Heart right ventricle (tissue), 16 donors: ENCODE measurements at regions of chr9 and their contacts with region 1.

Region 1: DNA sequence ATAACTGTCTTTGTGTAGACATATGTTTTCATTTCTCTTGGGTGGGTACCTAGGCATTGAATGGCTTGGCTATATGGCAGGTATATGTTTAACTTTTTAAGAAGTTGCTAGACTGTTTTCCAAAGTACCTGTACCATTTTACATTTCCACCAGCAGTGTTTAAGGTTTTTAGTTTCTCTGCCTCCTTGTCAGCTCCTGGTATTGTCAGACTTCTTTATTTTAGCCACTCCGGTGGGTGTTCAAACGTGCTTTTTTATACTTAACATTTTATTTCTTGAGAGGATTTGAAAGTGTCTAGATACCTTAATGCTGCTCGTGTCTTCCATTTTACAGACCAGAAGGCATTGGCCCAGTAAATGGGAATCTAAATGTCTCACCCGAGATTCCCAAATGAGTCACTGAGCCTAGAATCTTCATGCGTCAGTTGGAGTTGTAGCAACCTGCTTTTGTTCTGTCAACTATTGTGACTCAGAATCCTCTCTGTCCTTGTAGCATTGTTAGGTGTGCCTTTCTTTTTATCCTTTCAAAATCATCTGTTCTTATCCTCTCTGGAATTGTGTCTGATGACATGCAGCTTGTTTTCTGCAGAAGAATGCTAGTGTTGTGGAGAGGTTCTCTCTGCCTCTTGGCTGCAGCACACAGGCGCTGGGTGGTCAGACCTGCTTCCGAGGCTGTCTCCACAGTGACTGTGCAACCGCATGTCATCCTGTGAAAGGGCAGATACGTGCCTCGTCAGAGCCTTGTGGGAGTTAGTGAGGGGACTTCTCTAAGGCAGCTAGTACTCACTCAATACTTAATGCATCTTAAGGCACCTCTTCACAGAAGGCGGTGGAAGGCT is 291.8 kb downstream of the AOPEP start:
- DNase-seq: peak; percentile 54 to 62
- ATAC-seq: peak; percentile 32 to 85 (median 78)
- H3K4me3 ChIP-seq: peak overlapping the region in 5 of 10 donors; percentile 12 to 27 (median 18)
- H3K27ac ChIP-seq: peak overlapping the region; percentile 20 to 87 (median 73)
- H3K4me1 ChIP-seq: peaks cover 22 to 100% (median 95%) of the 10 kb centered on the region in 9 donors
- H3K27me3 ChIP-seq: no peaks in the 10 kb centered on the region
- CTCF ChIP-seq: no peak

Region 2: DNA sequence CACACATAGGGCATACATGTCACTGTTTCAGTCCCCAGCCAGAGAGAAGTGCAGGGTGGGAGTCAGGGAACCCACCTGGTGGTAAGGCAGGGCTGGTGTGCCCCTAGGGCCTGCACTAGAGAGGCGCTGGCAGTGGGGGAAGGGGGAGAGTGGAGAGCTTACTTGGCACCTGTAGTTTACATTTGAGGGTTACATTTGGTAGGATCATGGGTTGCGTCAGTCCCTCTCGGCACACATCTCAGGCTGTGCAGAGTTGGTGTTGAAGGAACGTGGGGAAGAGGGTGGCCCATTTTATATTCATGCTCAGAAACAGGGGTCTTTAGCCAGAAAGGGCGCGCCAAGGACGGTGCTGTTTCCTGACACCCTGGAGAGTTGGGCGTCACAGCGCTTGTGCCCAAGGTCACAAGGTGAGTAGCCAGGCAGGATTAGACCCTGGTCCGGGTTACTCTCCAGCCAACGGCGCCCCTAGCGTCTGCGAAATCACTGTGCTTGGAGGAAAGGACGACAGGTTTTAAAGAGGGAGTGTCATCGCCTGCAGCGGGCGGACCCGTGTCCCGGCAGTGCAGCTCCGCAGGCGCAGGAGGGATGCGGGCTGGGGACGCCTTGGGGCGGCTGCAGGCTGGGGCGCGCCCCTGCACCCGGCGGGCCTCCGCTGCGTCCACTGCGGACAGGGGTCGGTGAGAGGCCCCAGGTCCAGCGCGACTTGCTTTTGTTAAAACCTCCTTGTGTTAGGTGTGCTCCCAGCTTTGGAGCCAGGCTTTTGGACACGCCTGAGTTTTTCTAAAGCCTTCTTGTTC is 26.6 kb after region 1 on chr9:
- intact Hi-C with region 1: no loop called
- DNase-seq: peak in 1 of 2 donors; percentile 54
- ATAC-seq: peak; percentile 12 to 82 (median 60)
- H3K4me3 ChIP-seq: peak overlapping the region in 3 of 10 donors; percentile 8 to 23 (median 10)
- H3K27ac ChIP-seq: peak overlapping the region; percentile 56 to 87 (median 82)
- H3K4me1 ChIP-seq: peaks cover 18 to 97% (median 68%) of the 10 kb centered on the region in 9 donors
- H3K27me3 ChIP-seq: peaks cover 0 to 8% (median 0%) of the 10 kb centered on the region in 7 donors
- CTCF ChIP-seq: peak in 6 of 9 donors; percentile 29 to 54 (median 40)

Region 3: GRCh38 chr9:95078958-95079357 is 60.6 kb after region 1 on chr9:
- intact Hi-C with region 1: loop called in 3 of 10 experiments (anchors 5 to 10 kb)
- DNase-seq: no peak
- ATAC-seq: peak; percentile 42 to 61 (median 47)
- H3K4me3 ChIP-seq: no peak overlapping the region
- H3K27ac ChIP-seq: peak overlapping the region in 9 of 10 donors; percentile 2 to 86 (median 68)
- H3K4me1 ChIP-seq: peaks cover 36 to 100% (median 92%) of the 10 kb centered on the region in 9 donors
- H3K27me3 ChIP-seq: no peaks in the 10 kb centered on the region
- CTCF ChIP-seq: no peak